ENCODE measurements at regions of chr9 and their contacts with region 1.

Region 1: DNA sequence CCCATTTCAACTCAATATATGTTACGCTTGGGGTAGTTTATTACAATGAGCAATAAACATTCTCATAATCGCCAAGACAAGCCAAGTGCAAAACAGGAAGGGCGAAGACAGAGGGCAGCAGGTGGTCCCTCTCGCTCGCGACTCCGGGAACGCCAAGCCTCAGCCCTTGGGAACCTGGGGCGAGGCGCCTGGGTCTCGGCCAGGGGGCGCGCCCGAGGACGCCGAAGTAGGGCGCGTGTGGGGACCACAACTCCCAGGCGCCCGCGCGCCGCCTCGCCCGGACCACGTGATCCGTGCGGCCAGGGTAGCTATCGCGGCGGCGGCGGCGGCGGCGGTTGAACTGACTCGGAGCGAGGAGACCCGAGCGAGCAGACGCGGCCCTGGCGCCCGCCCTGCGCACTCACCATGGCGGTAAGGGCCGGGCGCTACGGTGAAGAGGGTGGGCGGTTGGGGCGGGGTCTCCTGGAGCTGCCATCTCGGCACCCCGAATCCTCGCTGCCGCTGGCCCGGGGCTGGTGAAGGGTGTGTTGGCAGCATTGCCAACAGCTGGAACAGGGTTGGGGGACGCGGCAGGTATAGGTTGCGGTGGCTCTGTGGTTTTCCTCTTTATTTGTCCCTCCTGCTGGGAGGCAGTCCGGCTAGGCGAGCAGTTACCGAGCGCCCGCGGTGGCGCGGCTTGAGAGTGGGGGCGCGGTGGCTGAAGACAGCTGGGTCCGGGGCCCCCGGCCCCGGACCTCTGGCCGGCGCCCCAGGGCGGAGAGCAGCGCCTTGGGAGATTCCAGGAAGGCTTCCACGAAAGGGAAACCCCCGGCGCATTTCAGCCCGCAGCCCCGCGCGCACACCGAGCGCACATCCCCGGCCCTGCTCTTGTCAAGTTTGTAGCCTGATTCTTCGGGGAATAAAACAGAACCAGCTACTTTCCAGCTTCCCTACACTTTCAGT is at the start of gene SLC31A2:
- DNase-seq: peak; percentile 94
- H3K4me3 ChIP-seq: peak within 1 kb of the TSS; percentile 63 to 97 (median 82)
- H3K27ac ChIP-seq: peak within 1 kb of the TSS; percentile 75 to 88 (median 83)
- H3K4me1 ChIP-seq: peaks cover 0 to 23% (median 14%) of the 10 kb centered on the region in 4 donors
- H3K27me3 ChIP-seq: no peaks in the 10 kb centered on the region
- CTCF ChIP-seq: peak in 1 of 4 experiments; percentile 22
- EP300 ChIP-seq: no peak
- POLR2A ChIP-seq: peak; percentile 17 to 25
- total RNA-seq, gene SLC31A2: 4.5 to 12.5 (median 7.7) TPM

Region 2: DNA sequence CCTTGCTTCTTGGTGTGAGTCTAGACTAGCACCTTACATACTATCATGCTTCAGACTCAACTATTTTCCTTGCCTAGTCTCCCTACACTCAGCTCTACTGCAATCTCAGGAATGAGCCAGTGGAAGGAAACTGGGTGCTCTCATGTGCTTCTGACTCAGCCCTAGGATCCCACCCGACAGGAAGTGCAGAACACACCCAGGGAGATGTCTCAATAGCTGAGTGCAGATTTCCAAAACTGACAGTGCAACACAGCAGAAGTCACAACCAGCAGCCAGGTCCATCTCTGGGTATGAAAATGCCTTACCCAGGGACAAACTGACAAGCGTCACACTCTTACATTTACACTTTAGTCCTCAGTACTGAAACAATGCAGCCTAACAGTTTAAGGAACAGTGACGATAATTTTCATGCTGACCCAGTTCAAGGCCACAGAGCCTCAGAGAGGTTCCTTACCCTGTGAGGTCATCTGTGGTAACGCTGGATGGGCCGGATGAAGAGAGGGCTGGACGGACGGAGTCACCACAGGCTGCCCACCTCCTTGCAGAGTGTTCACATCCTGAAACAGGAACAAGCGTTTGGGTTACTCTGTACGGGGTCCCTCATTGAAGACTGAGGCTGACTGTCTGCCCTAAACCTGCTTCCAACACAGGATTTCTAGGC is 37.1 kb after region 1 on chr9:
- intact Hi-C with region 1: no loop called
- DNase-seq: peak; percentile 84
- H3K4me3 ChIP-seq: no peak overlapping the region
- H3K27ac ChIP-seq: peak overlapping the region in 3 of 4 donors; percentile 8 to 54 (median 44)
- H3K4me1 ChIP-seq: no peaks in the 10 kb centered on the region
- H3K27me3 ChIP-seq: no peaks in the 10 kb centered on the region
- CTCF ChIP-seq: no peak
- EP300 ChIP-seq: peak in 1 of 4 donors; percentile 36
- POLR2A ChIP-seq: no peak

Region 3: GRCh38 chr9:113221003-113221799 is 70.3 kb after region 1 on chr9 and contains the starts of genes FKBP15 and SLC31A1:
- intact Hi-C with region 1: loop called (anchors 5 kb)
- DNase-seq: peak; percentile 99
- H3K4me3 ChIP-seq: peak within 1 kb of the TSS; percentile 61 to 76 (median 66)
- H3K27ac ChIP-seq: peak within 1 kb of the TSS; percentile 81 to 89 (median 87)
- H3K4me1 ChIP-seq: peaks cover 0 to 46% (median 28%) of the 10 kb centered on the region in 4 donors
- H3K27me3 ChIP-seq: no peaks in the 10 kb centered on the region
- CTCF ChIP-seq: no peak
- EP300 ChIP-seq: peak in 1 of 4 donors; percentile 53
- POLR2A ChIP-seq: peak; percentile 42 to 68
- total RNA-seq, gene FKBP15: 18.8 to 22.5 (median 20.9) TPM
- total RNA-seq, gene SLC31A1: 7.1 to 9.6 (median 8.6) TPM